Activated CD4-positive, alpha-beta memory T cell treated with anti-CD3 and anti-CD28 coated beads for 36 hours (primary cell): ENCODE measurements at regions of chr11 and their contacts with region 1.

Region 1: DNA sequence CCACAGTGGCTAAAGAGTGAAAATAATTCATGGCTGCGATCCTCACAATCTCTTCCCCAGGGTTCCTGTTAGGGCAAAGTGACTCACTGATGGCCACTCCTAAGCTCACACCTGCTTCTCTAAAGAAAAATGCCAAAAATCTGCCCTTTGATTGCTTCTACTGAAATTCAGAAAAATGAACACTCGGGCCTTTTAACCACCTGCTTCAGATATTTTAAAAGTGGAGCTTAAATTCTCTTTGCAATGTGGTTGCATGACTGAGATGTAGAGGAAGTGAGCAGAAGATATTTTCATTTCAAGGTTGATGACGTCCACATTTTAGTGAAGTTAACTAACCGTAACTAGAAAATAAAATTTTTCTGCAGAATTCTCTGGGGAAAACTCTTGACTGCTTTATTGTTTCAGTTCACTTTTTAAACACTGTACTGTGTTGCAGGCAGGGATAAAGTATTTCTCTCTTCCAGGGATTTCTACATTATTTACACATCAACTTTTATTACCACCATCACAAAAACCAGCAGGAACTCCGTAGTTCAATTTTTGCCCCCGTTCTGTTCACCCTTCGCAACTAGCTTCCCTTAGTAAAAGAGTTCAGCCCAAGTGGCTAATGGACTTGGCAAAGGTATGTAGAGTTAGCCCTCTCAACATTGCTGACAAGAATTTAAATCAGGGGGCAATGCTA is 8.5 kb downstream of the RAB30 start:
- DNase-seq: peak; percentile 28
- H3K4me3 Mint-ChIP-seq: peak overlapping the region; percentile 71
- H3K27ac Mint-ChIP-seq: peak overlapping the region; percentile 93
- H3K4me1 Mint-ChIP-seq: peaks cover 44% of the 10 kb centered on the region
- H3K27me3 Mint-ChIP-seq: no peaks in the 10 kb centered on the region

Region 2: GRCh38 chr11:82996966-82997606 is 66.1 kb before region 1 on chr11:
- CTCF ChIA-PET with region 1: no interaction called
- POLR2A ChIA-PET with region 1: no interaction called
- intact Hi-C with region 1: loop called (anchors 2 kb)
- DNase-seq: peak; percentile 67
- H3K4me3 Mint-ChIP-seq: no peak overlapping the region
- H3K27ac Mint-ChIP-seq: peak overlapping the region; percentile 43
- H3K4me1 Mint-ChIP-seq: peaks cover 60% of the 10 kb centered on the region
- H3K27me3 Mint-ChIP-seq: no peaks in the 10 kb centered on the region

Region 3: DNA sequence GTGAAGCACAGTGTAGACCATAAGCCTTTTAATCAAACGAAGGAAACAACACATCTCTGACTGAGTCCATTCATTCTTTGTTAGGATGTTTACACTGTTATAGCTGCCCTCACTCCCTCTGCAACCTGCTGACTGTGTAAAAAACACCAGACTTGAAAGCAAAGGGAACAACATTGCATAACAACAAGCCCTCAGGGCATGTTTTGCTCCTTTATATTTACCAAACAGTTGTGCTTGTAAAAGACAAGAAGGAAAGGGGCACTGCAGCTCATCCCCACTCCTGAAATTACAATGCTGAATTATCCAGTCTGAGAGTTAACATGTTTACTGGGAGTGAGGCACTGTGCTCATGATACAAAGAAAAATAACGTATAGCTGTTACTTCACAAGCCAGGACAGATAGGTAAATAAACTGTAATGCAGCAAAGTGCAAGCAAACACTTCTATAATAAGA is 37.9 kb before region 1 on chr11:
- CTCF ChIA-PET with region 1: no interaction called
- POLR2A ChIA-PET with region 1: no interaction called
- intact Hi-C with region 1: no loop called
- DNase-seq: no peak
- H3K4me3 Mint-ChIP-seq: no peak overlapping the region
- H3K27ac Mint-ChIP-seq: no peak overlapping the region
- H3K4me1 Mint-ChIP-seq: peaks cover 14% of the 10 kb centered on the region
- H3K27me3 Mint-ChIP-seq: no peaks in the 10 kb centered on the region

Region 4: GRCh38 chr11:83051760-83052671 is 11.2 kb before region 1 on chr11:
- CTCF ChIA-PET with region 1: interaction called, 3 read pairs
- POLR2A ChIA-PET with region 1: no interaction called
- intact Hi-C with region 1: loop called (anchors 1 kb)
- DNase-seq: no peak
- H3K4me3 Mint-ChIP-seq: no peak overlapping the region
- H3K27ac Mint-ChIP-seq: peak overlapping the region; percentile 0
- H3K4me1 Mint-ChIP-seq: peaks cover 51% of the 10 kb centered on the region
- H3K27me3 Mint-ChIP-seq: no peaks in the 10 kb centered on the region